GM12878 (cell line): ENCODE measurements at regions of chr12 and their contacts with region 1.

Region 1: DNA sequence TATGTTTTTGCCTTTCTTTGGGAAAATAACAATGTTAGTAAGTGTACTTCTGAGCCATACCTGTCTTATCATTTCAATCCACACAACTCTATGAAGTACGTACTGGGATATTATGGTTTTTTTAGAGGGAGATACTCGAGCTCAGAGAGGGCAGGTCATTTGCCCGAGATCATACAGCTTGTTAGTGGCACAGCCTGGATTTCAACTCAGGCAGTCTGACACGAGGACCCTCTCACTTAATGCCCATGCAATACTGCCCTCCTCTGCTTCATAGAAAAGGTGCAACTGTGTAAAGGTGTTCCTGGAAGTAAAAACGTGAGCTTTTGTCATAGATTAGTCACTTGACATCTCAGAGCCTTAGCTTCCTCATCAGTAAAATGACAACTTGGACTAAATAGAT is 128.0 kb downstream of the NDUFA12 start:
- DNase-seq: peak; percentile 86
- ATAC-seq: peak; percentile 55
- H3K4me3 ChIP-seq: peak overlapping the region; percentile 91; the same call in 1 of the 2 replicates
- H3K27ac ChIP-seq: no peak overlapping the region
- H3K4me1 ChIP-seq: peaks cover 9% of the 10 kb centered on the region
- H3K27me3 ChIP-seq: no peaks in the 10 kb centered on the region
- CTCF ChIP-seq: peak; percentile 57 to 83 (median 68); a peak in 4 of 6 replicates
- EP300 ChIP-seq: no peak
- POLR2A ChIP-seq: no peak
- RAD21 ChIP-seq: peak; percentile 98

Region 2: GRCh38 chr12:94532490-94533422 is 342.8 kb before region 1 on chr12:
- CTCF ChIA-PET with region 1: interaction called, 16 read pairs
- POLR2A ChIA-PET with region 1: no interaction called
- RAD21 ChIA-PET with region 1: interaction called, 14 read pairs
- SMC1A ChIA-PET with region 1: interaction called, 12 read pairs
- in situ Hi-C with region 1: no loop called
- intact Hi-C with region 1: no loop called
- DNase-seq: peak; percentile 36
- ATAC-seq: peak; percentile 99
- H3K4me3 ChIP-seq: no peak overlapping the region
- H3K27ac ChIP-seq: no peak overlapping the region
- H3K4me1 ChIP-seq: no peaks in the 10 kb centered on the region
- H3K27me3 ChIP-seq: no peaks in the 10 kb centered on the region; a peak in 1 of 4 replicates
- CTCF ChIP-seq: peak; percentile 83 to 89 (median 86)
- EP300 ChIP-seq: no peak
- POLR2A ChIP-seq: no peak
- RAD21 ChIP-seq: peak; percentile 99

Region 3: DNA sequence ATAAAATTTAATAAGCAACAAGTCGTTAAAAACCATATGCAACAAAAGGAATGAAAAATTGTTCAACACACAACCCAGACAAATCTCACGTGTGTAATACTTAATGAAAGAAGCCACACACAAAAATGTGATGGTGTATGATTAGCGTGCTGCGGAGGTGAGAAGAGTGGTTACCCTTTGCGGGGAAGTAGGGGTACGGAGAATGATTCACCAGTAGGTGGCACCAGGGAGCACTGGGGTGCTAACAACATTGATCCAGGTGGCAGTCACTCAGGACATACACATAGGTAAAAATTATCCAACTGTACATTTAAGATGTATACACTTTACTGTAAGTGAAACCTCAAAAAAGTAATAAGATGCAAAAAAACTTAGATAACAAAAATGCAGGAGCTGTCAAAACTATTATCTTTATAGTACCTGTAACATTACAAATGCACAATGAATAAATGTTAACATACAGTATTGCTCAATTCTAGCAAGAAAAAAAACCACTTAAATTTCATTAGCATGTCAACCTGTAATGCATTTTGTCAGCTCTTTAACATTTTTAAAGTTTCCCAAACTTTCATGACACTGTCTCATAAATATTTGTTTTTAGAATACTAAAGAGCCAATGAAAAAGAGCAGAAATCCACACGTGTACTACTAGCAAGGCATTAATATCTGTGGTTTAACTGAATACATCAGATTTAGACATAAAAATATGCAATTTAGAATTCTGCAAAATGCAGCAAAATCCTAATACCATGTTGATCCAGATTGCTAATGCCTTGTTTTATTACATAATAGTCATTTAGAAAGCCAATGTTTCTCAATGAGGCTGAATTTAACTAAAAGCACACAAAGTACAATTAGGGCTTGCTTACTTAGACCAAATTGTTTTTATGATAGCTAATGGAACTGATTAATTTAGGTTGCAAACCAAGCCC is 271.8 kb before region 1 on chr12:
- CTCF ChIA-PET with region 1: interaction called, 22 read pairs
- POLR2A ChIA-PET with region 1: no interaction called
- RAD21 ChIA-PET with region 1: interaction called, 19 read pairs
- SMC1A ChIA-PET with region 1: interaction called, 14 read pairs
- in situ Hi-C with region 1: no loop called
- intact Hi-C with region 1: loop called (anchors 2 kb)
- DNase-seq: no peak
- ATAC-seq: peak; percentile 94
- H3K4me3 ChIP-seq: no peak overlapping the region
- H3K27ac ChIP-seq: no peak overlapping the region
- H3K4me1 ChIP-seq: peaks cover 8% of the 10 kb centered on the region
- H3K27me3 ChIP-seq: no peaks in the 10 kb centered on the region
- CTCF ChIP-seq: peak; percentile 55 to 80 (median 73)
- EP300 ChIP-seq: no peak
- POLR2A ChIP-seq: no peak
- RAD21 ChIP-seq: peak; percentile 52

Region 4: GRCh38 chr12:94704452-94705306 is 170.8 kb before region 1 on chr12:
- CTCF ChIA-PET with region 1: interaction called, 30 read pairs
- POLR2A ChIA-PET with region 1: interaction called, 7 read pairs
- RAD21 ChIA-PET with region 1: interaction called, 73 read pairs
- SMC1A ChIA-PET with region 1: interaction called, 44 read pairs
- in situ Hi-C with region 1: no loop called
- intact Hi-C with region 1: no loop called
- DNase-seq: no peak
- ATAC-seq: no peak
- H3K4me3 ChIP-seq: no peak overlapping the region
- H3K27ac ChIP-seq: no peak overlapping the region
- H3K4me1 ChIP-seq: peaks cover 9% of the 10 kb centered on the region
- H3K27me3 ChIP-seq: no peaks in the 10 kb centered on the region
- CTCF ChIP-seq: no peak
- EP300 ChIP-seq: no peak
- POLR2A ChIP-seq: no peak
- RAD21 ChIP-seq: no peak

Region 5: DNA sequence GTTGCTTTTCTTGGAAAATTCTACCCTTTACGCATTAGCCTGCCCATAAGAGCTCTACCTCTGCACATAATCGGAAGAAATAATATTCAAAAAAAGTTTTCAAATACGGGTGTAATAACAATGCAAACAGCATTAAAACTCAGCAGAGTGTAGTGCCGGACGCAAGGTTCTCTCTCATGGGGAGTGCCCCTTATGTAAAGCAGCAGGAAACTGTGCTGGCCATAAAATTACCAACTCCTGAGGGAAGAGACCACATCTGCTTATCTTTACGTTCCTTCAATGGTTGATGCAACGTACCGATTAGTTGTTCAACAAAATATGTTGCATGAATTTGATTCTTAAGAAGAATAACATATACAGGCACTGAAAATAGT is 106.5 kb before region 1 on chr12:
- CTCF ChIA-PET with region 1: interaction called, 54 read pairs
- POLR2A ChIA-PET with region 1: interaction called, 12 read pairs
- RAD21 ChIA-PET with region 1: interaction called, 60 read pairs
- SMC1A ChIA-PET with region 1: interaction called, 65 read pairs
- in situ Hi-C with region 1: no loop called
- intact Hi-C with region 1: loop called (anchors 2 kb)
- DNase-seq: peak; percentile 53
- ATAC-seq: peak; percentile 91
- H3K4me3 ChIP-seq: peak overlapping the region; percentile 55; the same call in 1 of the 2 replicates
- H3K27ac ChIP-seq: peak overlapping the region; percentile 78
- H3K4me1 ChIP-seq: peaks cover 37% of the 10 kb centered on the region
- H3K27me3 ChIP-seq: no peaks in the 10 kb centered on the region
- CTCF ChIP-seq: no peak
- EP300 ChIP-seq: no peak
- POLR2A ChIP-seq: peak; percentile 26; the same call in 1 of the 2 replicates
- RAD21 ChIP-seq: no peak

Region 6: DNA sequence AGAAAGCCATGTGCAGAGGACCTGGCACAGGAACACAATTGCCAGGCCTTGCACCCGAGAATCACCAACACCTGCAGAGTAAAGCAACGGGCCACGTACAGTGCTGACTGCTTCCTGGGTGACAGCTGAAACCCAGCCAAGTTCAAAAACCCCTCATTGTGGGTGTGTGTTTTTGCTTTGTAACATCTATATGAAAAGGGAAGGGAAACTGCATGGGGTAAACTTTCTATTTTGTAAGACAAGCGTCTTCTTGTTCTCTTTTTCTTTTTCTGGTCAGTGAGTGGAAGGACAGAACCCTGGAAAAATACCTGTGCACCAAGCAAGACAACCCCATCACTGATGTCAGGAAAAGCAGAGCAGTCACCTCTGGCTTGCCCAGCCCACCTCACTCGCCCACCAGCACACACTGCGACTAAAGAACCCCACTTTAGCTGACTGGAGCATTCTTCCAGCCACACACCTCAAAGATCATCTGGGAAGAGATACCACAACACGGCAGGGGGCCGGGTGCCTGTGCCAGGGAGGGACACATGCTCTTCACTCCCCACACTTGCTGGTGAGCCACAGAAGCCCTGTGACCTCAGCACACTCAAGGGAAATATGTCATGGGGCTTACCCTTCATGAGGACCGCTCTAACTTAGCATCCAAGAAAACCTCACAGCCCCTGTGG is 44.3 kb before region 1 on chr12:
- CTCF ChIA-PET with region 1: interaction called, 29 read pairs
- POLR2A ChIA-PET with region 1: interaction called, 9 read pairs
- RAD21 ChIA-PET with region 1: interaction called, 65 read pairs
- SMC1A ChIA-PET with region 1: interaction called, 75 read pairs
- in situ Hi-C with region 1: no loop called
- intact Hi-C with region 1: loop called (anchors 1 kb)
- DNase-seq: peak; percentile 98
- ATAC-seq: peak; percentile 89
- H3K4me3 ChIP-seq: peak overlapping the region; percentile 52
- H3K27ac ChIP-seq: peak overlapping the region; percentile 94
- H3K4me1 ChIP-seq: peaks cover 46% of the 10 kb centered on the region
- H3K27me3 ChIP-seq: no peaks in the 10 kb centered on the region
- CTCF ChIP-seq: no peak
- EP300 ChIP-seq: peak; percentile 92 to 94
- POLR2A ChIP-seq: peak; percentile 68
- RAD21 ChIP-seq: peak; percentile 25; the same call in 1 of the 2 replicates